Activated CD4-positive, alpha-beta memory T cell treated with anti-CD3 and anti-CD28 coated beads for 36 hours (primary cell): ENCODE measurements at regions of chr5 and their contacts with region 1.

Region 1: DNA sequence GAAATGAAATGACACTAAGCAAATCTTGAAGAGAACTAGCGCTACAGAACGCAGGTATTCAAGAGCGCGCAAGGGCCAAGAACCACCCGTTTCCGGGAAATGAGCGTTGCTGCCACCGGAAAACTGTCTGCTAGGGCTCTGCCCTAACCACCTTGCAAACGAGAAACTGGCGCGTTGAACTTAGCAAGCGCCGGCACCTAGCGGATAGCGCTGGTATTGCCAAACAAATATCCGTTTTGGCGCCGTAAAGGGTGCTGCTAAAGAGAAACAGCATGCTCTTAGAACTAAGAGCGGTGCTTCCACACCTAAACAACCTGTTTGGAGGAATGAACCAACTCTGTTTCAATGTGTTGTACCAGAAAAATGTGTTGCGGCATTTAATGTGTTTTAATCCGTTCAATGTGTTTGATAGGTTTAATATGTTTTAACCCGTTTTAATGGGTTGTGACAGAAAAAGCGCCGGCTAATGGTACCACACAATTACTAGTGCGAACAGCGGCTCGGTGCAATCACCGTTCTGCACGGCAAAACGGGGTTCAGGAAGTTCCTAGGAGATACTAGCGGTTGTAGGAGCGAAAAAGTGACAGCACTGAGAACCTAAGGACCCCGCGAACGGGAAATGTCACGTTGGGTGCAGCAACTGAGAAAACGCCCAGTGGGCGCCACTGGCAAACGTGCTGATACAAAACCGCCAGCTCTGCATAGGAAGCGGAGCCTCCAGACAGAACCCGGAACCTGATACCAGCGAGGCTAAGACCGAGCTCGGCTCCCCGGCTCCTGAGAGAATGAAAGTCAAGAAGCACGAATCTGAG is at the start of gene ANXA2R:
- DNase-seq: peak; percentile 97
- H3K4me3 Mint-ChIP-seq: peak within 1 kb of the TSS; percentile 94
- H3K27ac Mint-ChIP-seq: peak within 1 kb of the TSS; percentile 96
- H3K4me1 Mint-ChIP-seq: peaks cover 41% of the 10 kb centered on the region
- H3K27me3 Mint-ChIP-seq: no peaks in the 10 kb centered on the region
- total RNA-seq, gene ANXA2R: 2.8 to 3.8 TPM

Region 2: GRCh38 chr5:42495914-42496313 is 544.6 kb before region 1 on chr5:
- CTCF ChIA-PET with region 1: no interaction called
- POLR2A ChIA-PET with region 1: no interaction called
- intact Hi-C with region 1: no loop called
- DNase-seq: no peak
- H3K4me3 Mint-ChIP-seq: no peak overlapping the region
- H3K27ac Mint-ChIP-seq: no peak overlapping the region
- H3K4me1 Mint-ChIP-seq: no peaks in the 10 kb centered on the region
- H3K27me3 Mint-ChIP-seq: no peaks in the 10 kb centered on the region

Region 3: GRCh38 chr5:42950440-42951292 is 89.8 kb before region 1 on chr5:
- CTCF ChIA-PET with region 1: interaction called, 37 read pairs
- POLR2A ChIA-PET with region 1: interaction called, 14 read pairs
- intact Hi-C with region 1: loop called (anchors 1 kb)
- DNase-seq: peak; percentile 86
- H3K4me3 Mint-ChIP-seq: peak overlapping the region; percentile 94
- H3K27ac Mint-ChIP-seq: peak overlapping the region; percentile 97
- H3K4me1 Mint-ChIP-seq: peaks cover 30% of the 10 kb centered on the region
- H3K27me3 Mint-ChIP-seq: no peaks in the 10 kb centered on the region

Region 4: DNA sequence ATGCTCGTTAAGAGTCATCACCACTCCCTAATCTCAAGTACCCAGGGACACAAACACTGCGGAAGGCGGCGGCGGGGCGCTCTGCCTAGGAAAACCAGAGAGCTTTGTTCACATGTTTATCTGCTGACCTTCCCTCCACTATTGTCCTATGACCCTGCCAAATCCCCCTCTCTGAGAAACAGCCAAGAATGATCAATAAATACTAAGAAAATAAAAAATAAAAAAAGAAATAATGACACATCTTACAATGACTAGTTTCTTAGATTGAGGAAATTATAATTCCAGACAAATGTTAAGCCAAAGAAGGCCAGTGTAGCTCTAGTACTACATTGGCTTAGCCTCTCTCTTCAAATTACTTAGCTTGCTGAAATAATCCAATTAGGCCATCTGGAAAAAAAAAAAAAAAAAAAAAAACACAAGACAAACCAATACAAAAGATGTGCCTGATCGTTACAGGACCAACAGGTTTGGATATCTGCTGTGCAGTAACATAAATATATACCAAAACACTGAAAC is 58.3 kb before region 1 on chr5:
- CTCF ChIA-PET with region 1: no interaction called
- POLR2A ChIA-PET with region 1: no interaction called
- intact Hi-C with region 1: no loop called
- DNase-seq: no peak
- H3K4me3 Mint-ChIP-seq: no peak overlapping the region
- H3K27ac Mint-ChIP-seq: no peak overlapping the region
- H3K4me1 Mint-ChIP-seq: peaks cover 25% of the 10 kb centered on the region
- H3K27me3 Mint-ChIP-seq: no peaks in the 10 kb centered on the region

Region 5: GRCh38 chr5:42994246-42995151 is 46.0 kb before region 1 on chr5:
- CTCF ChIA-PET with region 1: interaction called, 50 read pairs
- POLR2A ChIA-PET with region 1: interaction called, 53 read pairs
- intact Hi-C with region 1: loop called (anchors 1 kb)
- DNase-seq: peak; percentile 93
- H3K4me3 Mint-ChIP-seq: peak overlapping the region; percentile 87
- H3K27ac Mint-ChIP-seq: peak overlapping the region; percentile 94
- H3K4me1 Mint-ChIP-seq: peaks cover 25% of the 10 kb centered on the region
- H3K27me3 Mint-ChIP-seq: no peaks in the 10 kb centered on the region

Region 6: GRCh38 chr5:43008369-43009153 is 31.9 kb before region 1 on chr5:
- CTCF ChIA-PET with region 1: interaction called, 35 read pairs
- POLR2A ChIA-PET with region 1: interaction called, 30 read pairs
- intact Hi-C with region 1: loop called (anchors 1 kb)
- DNase-seq: peak; percentile 93
- H3K4me3 Mint-ChIP-seq: peak overlapping the region; percentile 81
- H3K27ac Mint-ChIP-seq: peak overlapping the region; percentile 88
- H3K4me1 Mint-ChIP-seq: peaks cover 26% of the 10 kb centered on the region
- H3K27me3 Mint-ChIP-seq: no peaks in the 10 kb centered on the region

Region 7: DNA sequence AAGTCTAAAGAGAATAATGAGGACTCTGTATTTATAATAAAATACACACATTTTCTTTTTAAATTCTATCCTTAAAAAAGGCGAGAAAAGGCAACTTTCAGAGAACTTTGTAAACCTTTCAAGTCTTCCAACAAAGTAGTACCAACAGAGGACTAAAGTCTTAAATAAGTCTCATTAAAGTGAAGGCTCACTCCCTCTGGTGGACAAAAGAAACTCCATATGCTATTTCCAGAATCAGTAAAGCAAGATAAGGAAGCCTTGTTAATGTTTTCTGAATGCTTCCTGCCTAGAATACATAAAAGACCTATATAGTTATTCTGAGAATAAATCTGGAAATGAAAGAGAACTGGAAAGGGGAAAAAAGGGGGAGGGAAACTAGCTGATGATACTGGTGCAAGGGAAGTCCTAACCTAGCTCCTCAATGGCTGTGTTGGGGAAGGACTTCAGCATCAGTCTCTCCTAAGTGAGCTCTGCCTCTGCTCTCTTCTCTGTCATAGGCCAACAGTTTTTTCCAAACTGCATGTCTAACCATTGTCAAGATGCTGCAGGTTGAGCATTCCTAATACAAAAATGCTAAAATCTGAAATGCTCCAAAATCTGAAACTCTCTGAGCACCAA is 265.6 kb after region 1 on chr5:
- CTCF ChIA-PET with region 1: interaction called, 3 read pairs
- POLR2A ChIA-PET with region 1: no interaction called
- intact Hi-C with region 1: loop called (anchors 1 kb)
- DNase-seq: no peak
- H3K4me3 Mint-ChIP-seq: peak overlapping the region; percentile 2
- H3K27ac Mint-ChIP-seq: peak overlapping the region; percentile 78
- H3K4me1 Mint-ChIP-seq: peaks cover 84% of the 10 kb centered on the region
- H3K27me3 Mint-ChIP-seq: no peaks in the 10 kb centered on the region